ENCODE measurements at regions of chr1 and their contacts with region 1.

Region 1: DNA sequence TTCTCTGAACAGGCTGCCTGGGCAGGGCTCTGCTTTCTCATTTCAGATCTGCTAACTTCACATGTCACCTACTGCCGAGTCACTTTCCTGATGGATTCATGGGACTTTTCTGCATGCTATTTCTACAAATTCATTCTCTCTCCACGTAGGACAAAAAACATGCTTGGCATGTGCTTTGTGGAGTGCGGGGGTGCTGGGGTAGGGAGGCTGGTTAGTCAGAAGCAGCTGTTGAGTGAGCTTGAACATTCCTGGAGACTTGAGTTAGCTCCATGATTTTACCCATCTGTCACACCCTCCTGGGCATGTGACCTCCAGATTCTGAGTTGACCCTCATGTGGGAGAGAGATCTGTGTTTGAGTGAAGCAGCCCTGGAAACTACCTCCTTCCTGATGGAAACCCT is 71.4 kb downstream of the UCK2 start:
- DNase-seq: peak; percentile 95
- H3K4me3 ChIP-seq: no peak overlapping the region
- H3K27ac ChIP-seq: peak overlapping the region; percentile 93
- H3K4me1 ChIP-seq: peaks cover 87% of the 10 kb centered on the region
- H3K27me3 ChIP-seq: no peaks in the 10 kb centered on the region
- CTCF ChIP-seq: no peak

Region 2: DNA sequence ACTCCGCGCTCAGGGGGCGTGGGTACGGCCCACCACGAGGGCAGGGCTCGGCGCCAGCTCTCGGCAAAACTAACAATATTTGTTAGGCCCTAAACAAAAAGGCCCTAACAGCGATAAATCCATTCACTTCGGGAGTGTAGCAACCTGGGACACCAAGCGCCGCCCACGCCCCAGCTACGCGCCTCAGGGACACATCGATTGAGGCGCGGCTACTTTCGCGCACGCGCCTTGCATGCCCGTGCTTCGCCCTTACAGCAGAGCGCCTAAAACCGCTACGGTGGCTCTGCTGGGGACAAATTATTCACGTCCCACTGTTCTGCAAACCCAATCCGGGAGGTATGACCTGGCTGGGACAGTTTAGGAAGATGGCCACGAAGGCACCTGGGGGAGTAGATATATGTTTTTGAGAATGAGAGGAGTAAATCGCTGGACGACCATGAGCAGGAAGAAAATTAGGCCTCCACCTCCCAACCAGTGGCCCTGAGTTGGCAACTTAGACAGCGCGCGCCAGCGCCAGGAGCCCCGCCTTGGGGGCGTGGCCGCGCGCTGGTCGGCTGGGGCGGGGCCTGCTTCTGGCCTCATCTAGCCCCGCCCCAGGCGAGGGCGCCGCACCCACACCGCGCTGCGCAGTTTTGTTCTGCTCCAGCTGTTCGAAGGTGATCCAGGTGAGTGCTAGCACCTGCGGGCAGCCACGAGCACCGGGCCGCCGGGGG is 268.1 kb before region 1 on chr1 and contains the start of gene MGST3:
- CTCF ChIA-PET with region 1: no interaction called
- dilution Hi-C with region 1: no loop called
- in situ Hi-C with region 1: no loop called
- intact Hi-C with region 1: loop called (anchors 5 kb)
- DNase-seq: peak; percentile 94
- H3K4me3 ChIP-seq: peak within 1 kb of the TSS; percentile 56 to 83 (median 80)
- H3K27ac ChIP-seq: peak within 1 kb of the TSS; percentile 75
- H3K4me1 ChIP-seq: peaks cover 18% of the 10 kb centered on the region
- H3K27me3 ChIP-seq: no peaks in the 10 kb centered on the region
- CTCF ChIP-seq: no peak
- total RNA-seq, gene MGST3: 96.0 to 130 TPM

Region 3: GRCh38 chr1:165807613-165808012 is 91.2 kb before region 1 on chr1:
- CTCF ChIA-PET with region 1: interaction called, 12 read pairs
- dilution Hi-C with region 1: no loop called
- in situ Hi-C with region 1: no loop called
- intact Hi-C with region 1: no loop called
- DNase-seq: peak; percentile 43
- H3K4me3 ChIP-seq: no peak overlapping the region
- H3K27ac ChIP-seq: no peak overlapping the region
- H3K4me1 ChIP-seq: no peaks in the 10 kb centered on the region
- H3K27me3 ChIP-seq: no peaks in the 10 kb centered on the region
- CTCF ChIP-seq: no peak

Region 4: DNA sequence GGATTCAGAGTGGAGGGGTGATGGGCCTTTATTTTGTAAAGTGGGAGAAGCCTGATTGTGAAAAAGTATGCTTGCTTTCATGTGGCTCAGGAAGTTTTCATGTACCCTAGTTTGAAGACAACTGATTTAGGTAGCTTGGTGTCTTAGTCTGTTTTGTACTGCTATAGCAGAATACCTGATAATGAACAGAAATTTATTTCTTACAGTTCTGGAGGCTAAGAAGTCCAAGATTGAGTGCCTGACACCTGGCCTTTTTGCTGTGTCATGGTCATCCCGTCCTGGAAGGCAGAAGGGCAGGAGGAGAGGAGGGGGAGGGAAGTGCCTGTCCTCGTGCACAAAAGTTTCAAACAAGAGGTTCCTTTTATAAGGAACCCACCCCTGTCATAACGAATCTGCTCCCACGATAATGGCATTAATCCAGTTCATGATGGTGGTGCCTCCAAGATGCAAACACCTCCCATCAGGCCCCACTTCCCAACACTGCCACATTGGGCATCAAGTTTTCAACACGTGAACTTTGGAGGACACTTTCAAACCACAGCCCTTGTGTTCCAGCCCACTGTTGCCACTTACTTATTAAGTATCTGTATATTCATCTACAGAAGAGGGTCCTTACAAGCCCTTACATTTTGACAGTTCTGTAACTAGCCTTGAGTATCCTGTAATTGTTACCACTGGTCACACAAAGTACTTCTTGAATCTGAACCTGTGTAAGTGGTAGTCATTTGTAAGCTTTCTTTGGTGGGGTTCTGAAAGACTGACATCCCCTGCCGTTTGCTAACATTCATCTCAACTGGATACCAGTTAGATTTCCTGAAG is 62.0 kb before region 1 on chr1:
- CTCF ChIA-PET with region 1: interaction called, 3 read pairs
- dilution Hi-C with region 1: loop called (anchors 5 kb)
- in situ Hi-C with region 1: no loop called
- intact Hi-C with region 1: no loop called
- DNase-seq: no peak
- H3K4me3 ChIP-seq: no peak overlapping the region
- H3K27ac ChIP-seq: no peak overlapping the region
- H3K4me1 ChIP-seq: peaks cover 5% of the 10 kb centered on the region
- H3K27me3 ChIP-seq: no peaks in the 10 kb centered on the region
- CTCF ChIP-seq: no peak

Region 5: DNA sequence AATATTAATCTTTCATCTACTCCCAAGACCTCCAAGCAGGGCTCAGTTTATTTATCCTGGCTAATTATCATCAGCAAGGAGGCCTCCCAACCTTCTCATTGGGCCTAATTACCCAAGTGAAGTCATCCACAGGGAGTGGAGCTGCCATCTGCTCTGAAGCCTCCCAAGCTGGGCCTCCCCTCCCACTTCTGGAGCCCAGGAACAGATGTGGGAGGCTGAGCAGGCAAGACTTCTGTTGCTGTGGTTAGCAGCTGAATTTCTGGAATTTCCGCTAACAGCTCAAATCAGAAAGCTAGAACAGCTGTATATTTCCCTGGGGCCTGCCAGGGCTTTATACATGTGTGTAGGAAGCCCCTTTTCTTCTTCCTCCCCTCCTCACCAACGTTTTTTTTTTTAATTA is 56.1 kb after region 1 on chr1:
- CTCF ChIA-PET with region 1: no interaction called
- dilution Hi-C with region 1: no loop called
- in situ Hi-C with region 1: no loop called
- intact Hi-C with region 1: no loop called
- DNase-seq: no peak
- H3K4me3 ChIP-seq: no peak overlapping the region
- H3K27ac ChIP-seq: no peak overlapping the region
- H3K4me1 ChIP-seq: no peaks in the 10 kb centered on the region
- H3K27me3 ChIP-seq: no peaks in the 10 kb centered on the region
- CTCF ChIP-seq: no peak

Measured in mammary epithelial cell (primary cell).